IMR-90 (cell line): ENCODE measurements at regions of chr4 and their contacts with region 1.

Region 1: GRCh38 chr4:80266253-80266901 is at the start of gene FGF5:
- DNase-seq: peak; percentile 94
- ATAC-seq: peak; percentile 87
- H3K4me3 ChIP-seq: peak within 1 kb of the TSS; percentile 63
- H3K27ac ChIP-seq: peak within 1 kb of the TSS; percentile 87
- H3K4me1 ChIP-seq: peaks cover 7% of the 10 kb centered on the region
- H3K27me3 ChIP-seq: no peaks in the 10 kb centered on the region
- CTCF ChIP-seq: no peak
- POLR2A ChIP-seq: peak; percentile 93
- RAD21 ChIP-seq: no peak
- total RNA-seq, gene FGF5: 18.6 and 35.8 TPM in 2 replicates

Region 2: DNA sequence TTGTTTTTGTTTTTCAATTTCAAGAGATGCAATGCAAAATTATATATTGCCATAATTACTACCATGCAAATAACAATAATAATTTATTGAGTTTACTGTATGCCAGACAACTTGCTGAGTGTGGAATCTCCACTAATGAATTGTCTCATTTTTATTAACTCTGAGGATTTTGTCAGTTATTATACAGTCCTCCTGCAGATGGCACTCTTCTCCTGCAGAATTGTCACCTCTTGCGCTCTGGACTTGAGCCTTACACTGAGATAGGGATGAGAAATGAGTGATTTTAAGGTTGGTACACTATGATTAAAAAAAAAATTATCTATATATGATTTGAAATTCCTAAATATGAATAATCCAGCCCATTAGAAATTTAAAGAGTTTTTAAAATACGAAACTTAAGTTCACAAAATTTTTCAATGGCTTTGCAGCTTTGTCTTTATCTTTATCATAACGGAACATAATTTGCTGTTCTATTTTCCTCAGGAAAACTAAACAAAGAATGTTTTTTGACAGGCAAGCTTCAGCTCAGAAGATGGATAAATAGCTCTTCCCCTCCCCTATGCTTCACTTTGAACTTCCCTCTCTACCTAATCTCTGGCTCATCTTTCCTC is 1314.4 kb before region 1 on chr4:
- CTCF ChIA-PET with region 1: no interaction called
- POLR2A ChIA-PET with region 1: no interaction called
- dilution Hi-C with region 1: no loop called
- in situ Hi-C with region 1: no loop called
- intact Hi-C with region 1: loop called (anchors 5 kb)
- DNase-seq: peak; percentile 45
- ATAC-seq: peak; percentile 80
- H3K4me3 ChIP-seq: no peak overlapping the region
- H3K27ac ChIP-seq: no peak overlapping the region
- H3K4me1 ChIP-seq: no peaks in the 10 kb centered on the region
- H3K27me3 ChIP-seq: peaks cover 5% of the 10 kb centered on the region
- CTCF ChIP-seq: peak; percentile 72
- POLR2A ChIP-seq: no peak
- RAD21 ChIP-seq: peak; percentile 77

Region 3: DNA sequence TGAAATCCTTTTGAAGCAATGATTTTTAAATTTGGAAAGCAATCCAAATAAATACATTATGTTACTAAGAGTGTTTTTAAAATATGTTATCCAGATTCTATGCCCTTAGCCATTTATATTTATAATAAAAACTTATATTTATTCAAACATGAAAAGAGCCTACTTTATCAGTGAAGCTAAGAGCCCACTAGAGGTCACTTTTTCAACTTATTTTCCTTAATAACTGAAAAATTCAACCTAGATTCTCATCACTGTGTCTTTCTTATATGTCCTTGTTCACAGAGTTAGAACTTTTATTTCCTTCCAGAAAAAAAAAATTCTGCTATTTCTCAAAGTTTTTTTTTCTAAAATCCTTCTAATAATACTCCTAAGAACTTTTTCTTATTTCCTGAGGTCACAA is 45.2 kb before region 1 on chr4:
- CTCF ChIA-PET with region 1: interaction called, 5 read pairs
- POLR2A ChIA-PET with region 1: interaction called, 3 read pairs
- dilution Hi-C with region 1: no loop called
- in situ Hi-C with region 1: loop called (anchors 5 kb)
- intact Hi-C with region 1: loop called (anchors 1 kb)
- DNase-seq: peak; percentile 61
- ATAC-seq: peak; percentile 60; the same call in 1 of the 2 replicates
- H3K4me3 ChIP-seq: no peak overlapping the region
- H3K27ac ChIP-seq: no peak overlapping the region
- H3K4me1 ChIP-seq: peaks cover 2% of the 10 kb centered on the region; the same call in 1 of the 2 replicates
- H3K27me3 ChIP-seq: no peaks in the 10 kb centered on the region
- CTCF ChIP-seq: peak; percentile 54
- POLR2A ChIP-seq: no peak
- RAD21 ChIP-seq: peak; percentile 49

Region 4: GRCh38 chr4:80307774-80308465 is 41.5 kb after region 1 on chr4:
- CTCF ChIA-PET with region 1: no interaction called
- POLR2A ChIA-PET with region 1: interaction called, 5 read pairs
- dilution Hi-C with region 1: no loop called
- in situ Hi-C with region 1: no loop called
- intact Hi-C with region 1: loop called (anchors 2 kb)
- DNase-seq: peak; percentile 79
- ATAC-seq: peak; percentile 53
- H3K4me3 ChIP-seq: peak overlapping the region; percentile 11; the same call in 1 of the 2 replicates
- H3K27ac ChIP-seq: peak overlapping the region; percentile 78
- H3K4me1 ChIP-seq: peaks cover 14% of the 10 kb centered on the region
- H3K27me3 ChIP-seq: no peaks in the 10 kb centered on the region
- CTCF ChIP-seq: no peak
- POLR2A ChIP-seq: no peak
- RAD21 ChIP-seq: no peak

Region 5: DNA sequence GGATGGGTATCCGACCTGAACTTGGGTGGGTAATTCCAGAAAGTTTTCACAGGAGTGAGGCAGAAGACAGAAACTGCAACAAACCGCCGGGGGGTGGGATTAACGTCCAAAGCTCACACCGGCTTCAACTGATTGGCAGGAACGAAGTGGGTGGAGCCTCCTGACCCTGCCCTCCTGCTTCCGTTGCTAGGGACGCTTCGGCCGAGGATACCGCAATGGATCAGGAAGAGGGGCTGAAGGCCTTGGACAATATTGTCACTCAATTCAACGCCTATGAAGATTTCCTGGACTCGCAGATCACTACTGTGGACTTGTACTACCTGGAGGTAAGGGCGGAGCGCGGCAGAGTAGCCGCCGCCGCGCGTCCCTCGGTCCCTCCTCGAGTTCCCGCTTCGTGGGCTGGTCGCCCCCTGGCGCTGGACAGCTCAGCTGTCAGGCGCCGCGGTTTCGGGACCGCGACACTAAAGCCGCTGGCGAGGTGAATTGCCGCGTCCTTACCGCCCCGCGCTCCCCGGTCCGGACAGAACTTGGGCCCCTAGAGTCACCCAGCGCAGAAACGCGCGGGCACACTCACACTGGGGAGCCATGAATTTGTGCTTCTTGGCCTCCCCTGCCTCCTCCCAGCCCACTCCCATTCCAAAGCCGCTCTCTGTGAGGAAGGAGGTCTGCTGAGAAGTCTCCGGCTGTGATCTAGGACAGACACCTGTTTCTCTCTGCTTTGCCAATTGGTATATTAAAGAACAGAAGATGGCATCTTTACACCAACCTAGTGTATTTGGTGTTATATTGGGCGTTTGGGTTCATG is 69.4 kb after region 1 on chr4 and contains the start of gene CFAP299:
- CTCF ChIA-PET with region 1: interaction called, 3 read pairs
- POLR2A ChIA-PET with region 1: no interaction called
- dilution Hi-C with region 1: no loop called
- in situ Hi-C with region 1: no loop called
- intact Hi-C with region 1: loop called (anchors 2 kb)
- DNase-seq: peak; percentile 90
- ATAC-seq: peak; percentile 99
- H3K4me3 ChIP-seq: peak within 1 kb of the TSS; percentile 84
- H3K27ac ChIP-seq: no peak within 1 kb of the TSS
- H3K4me1 ChIP-seq: peaks cover 4% of the 10 kb centered on the region
- H3K27me3 ChIP-seq: no peaks in the 10 kb centered on the region
- CTCF ChIP-seq: peak; percentile 58
- POLR2A ChIP-seq: 0 out of 2 replicates have a peak, but pooled peaks have one; percentile 25
- RAD21 ChIP-seq: peak; percentile 59
- total RNA-seq, gene CFAP299: 1.1 and 1.9 TPM in 2 replicates